Posterior vena cava (tissue), 2 donors: ENCODE measurements at regions of chr20 and their contacts with region 1.

Region 1: DNA sequence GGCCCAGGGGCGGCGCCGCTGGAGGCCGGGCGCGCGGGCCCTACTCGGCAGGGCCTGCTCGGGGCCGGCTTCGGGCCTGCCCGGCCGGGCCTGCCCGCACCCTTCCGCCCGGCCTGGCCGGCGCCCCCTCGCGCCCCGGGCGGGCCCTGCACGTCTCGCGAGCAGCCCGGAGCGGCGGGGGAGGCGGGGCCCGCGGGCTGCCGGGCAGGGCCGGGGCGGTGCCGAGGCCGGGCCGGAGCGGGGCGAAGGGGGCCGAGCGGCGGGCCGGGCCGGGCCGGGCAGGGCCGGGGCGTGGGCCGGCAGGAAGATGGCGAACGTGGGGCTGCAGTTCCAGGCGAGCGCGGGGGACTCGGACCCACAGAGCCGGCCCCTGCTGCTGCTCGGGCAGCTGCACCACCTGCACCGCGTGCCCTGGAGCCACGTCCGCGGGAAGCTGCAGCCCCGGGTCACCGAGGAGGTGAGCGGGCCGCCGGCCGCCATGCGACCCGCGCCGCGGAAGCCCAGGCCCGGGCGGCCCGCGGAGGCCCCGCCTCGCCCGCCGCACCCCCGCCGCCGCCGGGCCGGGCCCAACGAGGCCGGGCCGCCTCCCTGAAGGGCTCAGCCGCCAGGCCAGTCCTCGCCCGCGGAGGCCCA is at the start of gene NPEPL1:
- DNase-seq: no peak
- total RNA-seq, gene NPEPL1: 28.5 to 31.4 TPM

Region 2: DNA sequence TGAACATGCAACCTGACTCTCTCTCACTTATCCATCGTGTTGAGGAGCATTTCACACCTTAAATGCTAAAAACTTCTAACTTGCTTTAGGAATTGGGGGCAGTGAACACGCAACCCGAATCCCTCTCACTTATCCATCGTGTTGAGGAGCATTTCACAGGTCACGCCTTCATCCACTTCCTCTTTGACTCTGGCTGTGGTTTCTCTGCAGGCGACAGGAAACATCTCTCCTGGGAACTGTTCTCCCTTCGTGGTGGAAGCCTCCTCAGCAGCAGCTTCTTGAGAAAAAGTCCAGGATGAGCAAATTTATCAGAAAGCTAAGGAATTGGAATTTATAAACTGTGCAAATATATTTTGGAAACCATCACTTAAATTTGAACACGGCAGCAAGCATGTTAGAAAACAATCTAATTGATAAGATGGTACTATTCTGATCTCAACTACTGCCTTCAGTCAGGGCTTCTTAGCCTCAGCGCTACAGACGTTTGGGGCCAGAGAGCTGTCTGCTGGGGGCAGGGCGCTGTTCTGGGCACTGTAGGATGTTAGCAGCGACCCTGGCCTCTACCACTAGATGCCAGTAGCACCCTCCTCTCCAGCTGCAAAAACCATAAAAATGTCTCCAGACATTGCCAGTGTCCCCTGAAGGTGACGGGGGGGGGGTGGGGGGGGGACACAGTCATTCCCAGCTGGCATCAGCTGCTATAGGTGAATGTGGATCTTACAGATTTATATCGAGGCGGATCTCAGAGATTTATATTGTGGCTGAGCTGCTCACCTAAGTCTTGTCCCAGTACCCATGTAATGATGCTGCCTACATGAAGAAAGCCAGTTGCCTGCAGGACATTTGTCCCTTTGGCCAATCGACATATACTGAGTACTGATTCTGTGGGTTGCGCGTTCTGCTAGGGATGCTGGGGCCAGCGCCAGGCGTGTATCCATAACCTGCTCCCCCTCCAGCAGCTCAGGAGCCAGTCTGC is 1194.0 kb before region 1 on chr20:
- intact Hi-C with region 1: no loop called
- DNase-seq: no peak

Region 3: DNA sequence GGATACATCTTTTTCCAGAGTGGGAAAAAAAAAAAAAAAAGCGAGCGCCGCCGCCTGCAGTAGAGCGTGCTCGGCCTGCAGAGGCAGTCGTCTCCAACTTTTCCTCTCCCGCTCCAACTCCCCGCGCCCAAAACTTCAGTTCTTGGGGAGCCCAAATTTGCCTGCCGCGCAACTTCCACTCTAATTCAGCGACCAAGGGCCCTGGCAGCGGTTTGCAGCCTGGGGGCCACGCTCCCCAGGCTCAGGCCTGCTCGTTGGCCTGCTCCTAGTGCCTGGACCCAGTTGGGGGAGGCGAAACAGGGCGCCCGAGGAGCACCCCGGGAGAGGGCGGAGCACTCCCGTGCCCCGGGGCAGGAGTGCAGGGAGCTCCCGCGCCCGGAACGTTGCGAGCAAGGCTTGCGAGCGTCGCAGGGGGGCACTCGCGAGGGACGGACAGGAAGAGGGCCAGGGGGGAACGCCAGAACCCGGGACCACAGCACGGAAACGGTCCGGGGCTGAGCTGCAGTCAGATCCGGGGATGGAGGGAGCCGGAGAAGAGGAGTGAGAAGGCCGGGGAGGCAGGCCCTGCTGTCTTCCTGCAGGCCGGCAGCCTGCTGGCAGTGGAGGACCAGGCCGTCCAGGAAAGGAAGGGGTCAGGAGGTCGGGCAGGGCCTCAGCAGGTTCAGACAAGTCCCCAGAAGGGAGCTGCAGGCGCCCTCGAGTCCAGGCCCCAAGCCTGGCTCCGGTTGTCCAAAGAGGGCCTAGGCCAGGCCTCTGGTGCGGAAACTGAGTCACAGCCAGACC is 41.7 kb before region 1 on chr20 and contains the start of gene STX16:
- intact Hi-C with region 1: loop called in 1 of 2 experiments (anchors 2 kb)
- DNase-seq: peak; percentile 97
- total RNA-seq, gene STX16: 38.7 to 41.5 TPM

Region 4: DNA sequence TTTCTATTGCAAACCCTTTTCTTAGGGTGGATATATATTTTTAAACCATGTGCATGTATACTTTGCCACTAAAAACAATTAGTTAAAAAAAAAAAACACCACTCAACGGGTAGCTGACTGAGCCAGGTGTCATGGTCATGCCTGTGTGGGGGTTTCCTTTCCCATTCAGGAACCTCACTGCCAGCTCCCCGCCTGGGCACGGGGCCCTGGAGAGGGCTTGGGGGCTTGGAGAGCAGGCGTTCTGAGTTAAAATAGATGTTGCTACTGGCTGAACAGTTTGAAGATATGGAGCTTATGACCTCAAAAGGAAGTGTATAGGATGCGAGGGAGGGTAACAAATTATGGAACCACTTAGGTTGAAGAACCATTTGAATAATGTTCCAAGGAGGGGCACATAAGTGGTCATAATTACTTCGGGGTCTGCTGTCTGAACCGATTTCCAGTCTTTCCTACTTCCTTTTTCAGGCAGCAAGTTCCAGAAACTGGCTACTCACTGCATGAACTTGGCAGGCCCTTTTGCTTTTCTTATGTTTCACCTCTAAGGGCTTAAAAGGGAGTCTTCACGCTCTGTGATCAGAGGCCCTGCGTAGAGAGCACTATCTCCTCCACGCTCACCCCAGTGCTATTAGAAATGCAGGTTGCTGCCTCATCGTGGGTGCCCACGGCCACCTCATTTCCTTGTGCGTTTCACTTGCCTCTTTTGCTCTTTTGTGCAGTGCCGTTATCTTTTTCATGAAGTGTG is 31.7 kb before region 1 on chr20:
- intact Hi-C with region 1: no loop called
- DNase-seq: no peak

Region 5: DNA sequence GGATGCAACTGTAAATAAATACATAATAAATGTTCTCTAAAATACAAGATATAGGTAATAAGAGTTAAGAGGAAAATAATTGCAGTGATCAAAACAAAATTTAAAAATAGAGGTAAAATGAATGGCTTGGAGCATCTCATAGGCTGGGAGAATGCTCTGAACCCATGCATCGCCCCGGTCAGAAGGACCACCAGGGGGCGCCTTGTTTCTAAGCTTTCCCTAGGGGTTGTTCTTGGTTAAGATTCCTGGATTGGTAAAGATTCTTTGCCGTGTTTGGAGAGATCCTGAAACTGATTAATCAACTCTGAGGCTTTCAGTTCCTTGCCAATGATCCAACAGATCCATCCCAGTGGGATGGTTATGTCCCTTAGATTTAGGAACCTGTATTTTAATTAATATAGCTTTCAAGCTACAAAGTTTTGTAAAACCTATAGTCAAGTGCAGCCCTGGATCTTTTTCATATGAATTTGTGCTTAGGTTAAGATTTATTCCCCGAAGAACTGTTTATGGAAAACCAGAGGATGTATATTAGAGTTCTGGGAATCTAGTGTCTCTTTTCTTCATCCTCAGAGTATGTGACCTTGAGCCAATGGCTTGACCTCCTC is 395.2 kb after region 1 on chr20:
- intact Hi-C with region 1: no loop called
- DNase-seq: peak; percentile 91